Spleen (tissue), 13 donors: ENCODE measurements at regions of chr12 and their contacts with region 1.

Region 1: GRCh38 chr12:47156167-47156736 is 76.5 kb upstream of the AMIGO2 start:
- DNase-seq: no peak
- H3K4me3 ChIP-seq: no peak overlapping the region
- H3K27ac ChIP-seq: peak overlapping the region in 7 of 8 donors; percentile 29 to 79 (median 66)
- H3K4me1 ChIP-seq: peaks cover 0 to 21% (median 11%) of the 10 kb centered on the region in 6 donors
- H3K27me3 ChIP-seq: no peaks in the 10 kb centered on the region
- CTCF ChIP-seq: no peak
- POLR2A ChIP-seq: no peak

Region 2: GRCh38 chr12:47095446-47096236 is 60.6 kb before region 1 on chr12:
- intact Hi-C with region 1: loop called (anchors 10 kb)
- DNase-seq: no peak
- H3K4me3 ChIP-seq: no peak overlapping the region
- H3K27ac ChIP-seq: no peak overlapping the region
- H3K4me1 ChIP-seq: peaks cover 0 to 3% (median 0%) of the 10 kb centered on the region in 6 donors
- H3K27me3 ChIP-seq: no peaks in the 10 kb centered on the region
- CTCF ChIP-seq: no peak
- POLR2A ChIP-seq: no peak

Region 3: DNA sequence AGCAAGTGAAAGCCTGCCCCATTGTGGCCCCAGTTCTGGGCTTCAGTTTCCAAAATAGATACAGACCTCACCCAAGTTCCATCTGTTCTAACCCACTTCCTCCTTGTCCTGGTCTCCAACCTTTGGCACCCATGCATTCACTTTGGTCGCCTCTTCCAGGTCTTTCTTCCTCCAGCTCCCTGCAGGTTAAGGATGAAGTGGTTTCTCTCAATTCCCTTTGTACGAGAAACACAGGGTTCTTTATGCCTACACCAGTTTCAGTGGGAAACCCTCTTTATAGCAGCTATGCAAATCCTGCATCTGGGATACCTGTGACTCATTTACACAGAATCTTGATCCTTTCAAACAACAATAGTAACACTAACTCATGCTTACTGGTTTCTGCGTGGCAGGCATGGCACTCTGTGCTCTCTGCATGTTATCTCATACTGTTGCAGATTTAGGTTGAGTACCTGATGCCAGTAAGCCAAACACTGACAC is 34.1 kb after region 1 on chr12:
- intact Hi-C with region 1: no loop called
- DNase-seq: no peak
- H3K4me3 ChIP-seq: no peak overlapping the region
- H3K27ac ChIP-seq: peak overlapping the region in 4 of 8 donors; percentile 45 to 74 (median 60)
- H3K4me1 ChIP-seq: peaks cover 22 to 74% (median 64%) of the 10 kb centered on the region in 6 donors
- H3K27me3 ChIP-seq: no peaks in the 10 kb centered on the region
- CTCF ChIP-seq: no peak
- POLR2A ChIP-seq: no peak

Region 4: DNA sequence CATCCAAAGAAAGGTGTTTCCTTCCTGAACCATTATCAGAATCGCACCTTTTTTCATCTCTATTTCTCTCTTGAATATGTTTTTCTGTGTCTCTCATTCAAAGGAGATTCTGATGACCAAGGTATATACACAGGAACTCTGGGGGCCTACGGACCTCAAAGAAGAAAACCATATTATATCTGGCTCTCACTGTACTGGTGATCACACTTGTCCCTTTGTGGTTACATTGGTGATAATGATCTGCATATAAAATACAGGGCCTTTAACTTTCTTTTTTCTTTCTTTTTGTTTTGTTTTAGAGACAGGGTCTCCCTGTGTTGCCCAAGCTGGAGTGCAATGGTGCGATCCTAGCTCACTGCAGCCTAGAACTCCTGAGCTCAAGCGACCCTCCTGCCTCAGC is 108.7 kb after region 1 on chr12:
- intact Hi-C with region 1: no loop called
- DNase-seq: no peak
- H3K4me3 ChIP-seq: no peak overlapping the region
- H3K27ac ChIP-seq: no peak overlapping the region
- H3K4me1 ChIP-seq: peaks cover 3 to 24% (median 19%) of the 10 kb centered on the region in 6 donors
- H3K27me3 ChIP-seq: no peaks in the 10 kb centered on the region
- CTCF ChIP-seq: no peak
- POLR2A ChIP-seq: no peak

Region 5: DNA sequence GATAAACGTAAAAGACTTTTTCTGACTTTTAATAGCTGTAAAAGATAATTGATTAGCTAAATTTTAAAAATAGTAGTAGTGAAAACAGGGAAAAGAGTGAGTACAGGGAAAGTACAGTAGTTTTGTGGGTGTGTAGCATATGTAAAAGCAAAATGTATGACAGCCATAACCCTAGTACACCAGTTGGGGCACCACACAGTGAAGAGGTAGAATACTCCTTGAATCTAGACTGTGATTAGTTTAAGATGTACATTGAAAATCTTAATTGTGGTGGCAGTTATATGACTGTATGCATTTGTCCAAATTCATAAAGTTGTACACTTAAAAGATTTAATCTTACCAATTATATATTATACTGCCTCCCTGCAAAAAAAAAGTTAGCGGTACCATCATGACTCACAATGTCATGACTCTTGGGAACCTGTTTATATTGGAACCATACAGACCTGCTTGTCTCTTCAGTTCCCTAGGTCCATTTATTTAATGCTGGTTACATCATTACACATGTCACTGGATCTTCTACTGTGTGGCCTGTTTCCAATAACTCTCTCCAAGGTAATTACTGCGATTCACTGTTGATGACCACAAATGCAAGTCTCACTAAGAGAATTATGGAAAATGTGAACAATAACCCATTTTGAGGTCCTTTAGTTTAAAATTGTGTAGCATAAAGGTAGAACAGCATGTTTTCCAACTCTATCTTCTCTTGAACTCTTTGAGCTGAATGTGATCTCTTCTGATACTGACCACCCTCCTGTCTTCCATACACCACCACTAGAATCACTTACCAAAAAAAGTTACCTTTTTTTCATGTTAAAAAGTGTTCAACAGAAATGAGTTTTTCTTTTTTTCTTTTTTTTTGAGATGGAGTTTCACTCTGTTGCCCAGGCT is 187.7 kb after region 1 on chr12:
- intact Hi-C with region 1: no loop called
- DNase-seq: no peak
- H3K4me3 ChIP-seq: no peak overlapping the region
- H3K27ac ChIP-seq: no peak overlapping the region
- H3K4me1 ChIP-seq: peaks cover 0 to 7% (median 0%) of the 10 kb centered on the region in 6 donors
- H3K27me3 ChIP-seq: no peaks in the 10 kb centered on the region
- CTCF ChIP-seq: no peak
- POLR2A ChIP-seq: no peak